HCT116 (cell line): ENCODE measurements at regions of chr6 and their contacts with region 1.

Region 1: DNA sequence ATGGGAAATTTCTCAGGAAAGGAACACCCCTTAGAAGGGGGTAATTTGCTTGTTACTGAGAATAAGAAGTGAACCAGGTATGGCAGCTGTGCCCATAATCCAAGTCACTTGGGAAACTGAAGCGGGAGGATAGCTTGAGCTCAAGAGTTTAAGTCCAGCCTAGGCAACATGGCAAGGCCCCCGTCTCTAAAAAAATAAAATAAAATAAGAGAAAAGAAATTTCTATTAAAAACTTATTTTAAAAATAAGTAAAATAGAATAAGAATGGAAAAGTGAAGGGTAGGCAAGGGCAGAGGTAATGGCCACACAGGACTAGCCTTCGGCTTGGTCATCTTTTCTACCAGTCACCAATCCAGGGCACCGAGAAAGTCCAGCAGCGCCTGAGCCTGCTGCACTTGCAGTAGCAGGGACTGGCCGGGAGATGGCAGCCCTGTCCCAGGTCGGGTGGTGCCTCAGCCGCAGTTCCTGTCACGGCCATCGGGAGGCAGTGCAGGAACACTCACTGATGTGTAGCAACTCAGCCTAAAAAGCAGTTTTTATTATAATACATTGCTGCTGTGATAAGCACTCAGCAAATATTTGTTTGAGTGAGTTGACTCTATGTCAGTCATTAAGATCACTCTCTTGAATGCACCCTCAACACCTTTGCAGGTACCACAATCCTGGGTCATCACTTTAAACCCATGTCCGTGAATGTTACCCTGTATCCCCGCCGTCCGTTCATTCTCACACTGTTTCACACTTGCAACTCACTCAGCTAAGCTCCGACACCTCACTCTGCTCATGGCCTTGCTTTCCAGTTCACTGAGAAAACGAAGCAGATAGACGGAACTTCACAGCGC is 23.2 kb upstream of the GCM1 start:
- DNase-seq: peak; percentile 58
- ATAC-seq: peak; percentile 91
- H3K4me3 ChIP-seq: no peak overlapping the region
- H3K27ac ChIP-seq: no peak overlapping the region
- H3K4me1 ChIP-seq: peaks cover 0 to 10% of the 10 kb centered on the region in 2 experiments; a peak in 1 of 4 replicates
- H3K27me3 ChIP-seq: no peaks in the 10 kb centered on the region
- CTCF ChIP-seq: peak; percentile 100
- POLR2A ChIP-seq: no peak
- RAD21 ChIP-seq: peak; percentile 100

Region 2: DNA sequence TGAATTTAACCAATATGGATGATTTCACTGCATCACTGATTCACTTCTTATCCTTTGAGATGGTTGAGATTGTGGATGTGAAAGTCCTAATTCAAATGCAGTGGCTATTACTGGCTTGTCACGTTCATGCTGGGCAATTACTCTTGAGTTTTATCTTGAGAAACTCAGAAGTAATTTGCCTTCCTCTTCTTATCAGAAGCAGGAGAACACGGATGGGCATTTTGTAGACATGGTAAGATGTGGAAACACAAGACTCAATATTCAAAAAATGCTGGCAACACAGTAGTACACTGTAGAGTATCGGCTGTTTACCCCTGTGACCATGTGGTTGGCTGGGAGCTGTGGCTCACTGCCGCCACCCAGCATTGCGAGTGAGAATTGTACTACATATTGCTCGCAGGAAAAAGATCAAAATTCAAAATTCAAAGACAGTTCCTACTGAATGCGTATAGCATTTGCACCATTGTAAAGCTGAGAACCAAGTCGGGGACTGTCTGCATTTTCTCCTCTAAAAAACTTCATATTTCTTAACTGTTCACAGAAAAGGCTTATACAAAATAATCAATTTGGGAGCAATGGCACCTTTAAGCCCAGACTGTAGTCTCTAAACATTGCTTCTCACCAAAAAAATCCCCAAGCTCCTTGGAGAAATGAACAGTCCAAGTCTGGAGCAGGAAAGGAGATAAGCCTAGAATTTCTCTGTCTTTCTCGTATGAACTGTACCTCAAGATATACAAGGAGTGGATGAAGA is 238.9 kb after region 1 on chr6:
- CTCF ChIA-PET with region 1: interaction called, 7 read pairs
- POLR2A ChIA-PET with region 1: no interaction called
- RAD21 ChIA-PET with region 1: interaction called in 1 of 2 experiments, 3 read pairs
- intact Hi-C with region 1: loop called (anchors 1 kb)
- DNase-seq: peak; percentile 22
- ATAC-seq: peak; percentile 99
- H3K4me3 ChIP-seq: no peak overlapping the region
- H3K27ac ChIP-seq: no peak overlapping the region
- H3K4me1 ChIP-seq: peaks cover 0 to 3% of the 10 kb centered on the region in 2 experiments; a peak in 1 of 4 replicates
- H3K27me3 ChIP-seq: no peaks in the 10 kb centered on the region
- CTCF ChIP-seq: peak; percentile 66 to 85 (median 71)
- POLR2A ChIP-seq: no peak
- RAD21 ChIP-seq: peak; percentile 87

Region 3: GRCh38 chr6:53437557-53438202 is 265.9 kb after region 1 on chr6:
- CTCF ChIA-PET with region 1: interaction called, 6 read pairs
- POLR2A ChIA-PET with region 1: no interaction called
- RAD21 ChIA-PET with region 1: no interaction called
- intact Hi-C with region 1: loop called (anchors 1 kb)
- DNase-seq: peak; percentile 67
- ATAC-seq: peak; percentile 98
- H3K4me3 ChIP-seq: no peak overlapping the region
- H3K27ac ChIP-seq: no peak overlapping the region
- H3K4me1 ChIP-seq: peaks cover 0 to 9% of the 10 kb centered on the region in 2 experiments; a peak in 2 of 4 replicates
- H3K27me3 ChIP-seq: no peaks in the 10 kb centered on the region
- CTCF ChIP-seq: peak; percentile 75 to 97 (median 90)
- POLR2A ChIP-seq: no peak
- RAD21 ChIP-seq: peak; percentile 91